ENCODE measurements at regions of chr7 and their contacts with region 1.

Region 1: GRCh38 chr7:95649546-95649945 is 53.2 kb upstream of the PDK4 start:
- DNase-seq: no peak
- H3K4me3 ChIP-seq: no peak overlapping the region
- H3K27ac ChIP-seq: no peak overlapping the region
- H3K4me1 ChIP-seq: no peaks in the 10 kb centered on the region
- H3K27me3 ChIP-seq: peaks cover 8% of the 10 kb centered on the region
- CTCF ChIP-seq: no peak

Region 2: GRCh38 chr7:94313926-94314325 is 1335.6 kb before region 1 on chr7:
- CTCF ChIA-PET with region 1: interaction called, 34 read pairs
- dilution Hi-C with region 1: no loop called
- in situ Hi-C with region 1: no loop called
- intact Hi-C with region 1: no loop called
- DNase-seq: no peak
- H3K4me3 ChIP-seq: no peak overlapping the region
- H3K27ac ChIP-seq: no peak overlapping the region
- H3K4me1 ChIP-seq: no peaks in the 10 kb centered on the region
- H3K27me3 ChIP-seq: no peaks in the 10 kb centered on the region
- CTCF ChIP-seq: no peak